K562 (cell line): ENCODE measurements at regions of chr15 and their contacts with region 1.

Region 1: DNA sequence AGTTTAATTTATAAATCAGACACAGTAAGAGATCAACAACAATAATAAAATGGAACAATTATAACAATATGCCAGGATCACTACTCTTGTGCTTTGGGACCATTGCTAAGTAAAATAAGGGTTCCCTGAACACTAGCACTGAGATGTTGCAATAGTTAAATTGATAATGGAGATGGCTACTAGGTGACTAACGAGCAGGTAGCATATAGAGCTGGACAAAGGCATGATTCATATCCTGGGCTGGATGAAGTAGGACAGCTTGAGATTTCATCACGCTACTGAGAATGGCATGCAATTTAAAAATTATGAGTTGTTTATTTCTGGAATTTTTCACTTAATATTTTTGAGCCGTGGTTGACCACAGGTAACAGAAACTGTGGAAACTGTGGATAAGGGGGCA is 20.7 kb upstream of the MYZAP start:
- DNase-seq: no peak
- ATAC-seq: no peak
- H3K4me3 ChIP-seq: no peak overlapping the region
- H3K27ac ChIP-seq: no peak overlapping the region
- H3K4me1 ChIP-seq: no peaks in the 10 kb centered on the region; a peak in 1 of 5 replicates
- H3K27me3 ChIP-seq: peaks cover 7 to 30% of the 10 kb centered on the region in 2 experiments
- CTCF ChIP-seq: no peak
- EP300 ChIP-seq: no peak
- POLR2A ChIP-seq: no peak
- RAD21 ChIP-seq: no peak

Region 2: GRCh38 chr15:57743424-57743823 is 172.4 kb after region 1 on chr15:
- CTCF ChIA-PET with region 1: no interaction called
- POLR2A ChIA-PET with region 1: no interaction called
- in situ Hi-C with region 1: no loop called
- intact Hi-C with region 1: loop called (anchors 10 kb)
- DNase-seq: peak in 2 of 4 experiments; percentile 15 to 32
- ATAC-seq: peak; percentile 80
- H3K4me3 ChIP-seq: no peak overlapping the region
- H3K27ac ChIP-seq: no peak overlapping the region
- H3K4me1 ChIP-seq: peaks cover 0 to 2% of the 10 kb centered on the region in 2 experiments; a peak in 1 of 5 replicates
- H3K27me3 ChIP-seq: peaks cover 0 to 25% of the 10 kb centered on the region in 2 experiments; a peak in 3 of 5 replicates
- CTCF ChIP-seq: peak; percentile 36 to 47 (median 39); a peak in 5 of 6 replicates
- EP300 ChIP-seq: no peak
- POLR2A ChIP-seq: no peak
- RAD21 ChIP-seq: peak; percentile 34 to 53